ENCODE measurements at regions of chr6 and their contacts with region 1.

Region 1: GRCh38 chr6:32685603-32686002 is 19.1 kb upstream of the HLA-DQB1 start:
- DNase-seq: peak in 1 of 2 donors; percentile 88
- ATAC-seq: peak; percentile 90 to 96 (median 95)
- H3K4me3 ChIP-seq: no peak overlapping the region
- H3K4me3 Mint-ChIP-seq: peak overlapping the region; percentile 67
- H3K27ac ChIP-seq: peak overlapping the region; percentile 76
- H3K27ac Mint-ChIP-seq: peak overlapping the region; percentile 77 to 90
- H3K4me1 ChIP-seq: peaks cover 4% of the 10 kb centered on the region
- H3K4me1 Mint-ChIP-seq: peaks cover 27 to 39% of the 10 kb centered on the region in 2 donors
- H3K27me3 ChIP-seq: no peaks in the 10 kb centered on the region
- H3K27me3 Mint-ChIP-seq: peaks cover 8 to 24% of the 10 kb centered on the region in 2 donors
- CTCF ChIP-seq: no peak

Region 2: GRCh38 chr6:32337186-32337805 is 348.3 kb before region 1 on chr6:
- intact Hi-C with region 1: no loop called
- DNase-seq: no peak
- ATAC-seq: no peak
- H3K4me3 ChIP-seq: no peak overlapping the region
- H3K4me3 Mint-ChIP-seq: no peak overlapping the region
- H3K27ac ChIP-seq: no peak overlapping the region
- H3K27ac Mint-ChIP-seq: no peak overlapping the region
- H3K4me1 ChIP-seq: no peaks in the 10 kb centered on the region
- H3K4me1 Mint-ChIP-seq: no peaks in the 10 kb centered on the region
- H3K27me3 ChIP-seq: peaks cover 4% of the 10 kb centered on the region
- H3K27me3 Mint-ChIP-seq: peaks cover 8% of the 10 kb centered on the region in 2 donors
- CTCF ChIP-seq: no peak

Region 3: GRCh38 chr6:32666420-32667300 is 18.9 kb before region 1 on chr6 and contains the start of gene HLA-DQB1:
- intact Hi-C with region 1: loop called (anchors 1 kb)
- DNase-seq: peak; percentile 60 to 78
- ATAC-seq: peak; percentile 72 to 81 (median 73)
- H3K4me3 ChIP-seq: peak within 1 kb of the TSS; percentile 43
- H3K4me3 Mint-ChIP-seq: peak within 1 kb of the TSS; percentile 85
- H3K27ac ChIP-seq: peak within 1 kb of the TSS; percentile 84
- H3K27ac Mint-ChIP-seq: peak within 1 kb of the TSS; percentile 80 to 92
- H3K4me1 ChIP-seq: peaks cover 14% of the 10 kb centered on the region
- H3K4me1 Mint-ChIP-seq: peaks cover 23 to 41% of the 10 kb centered on the region in 2 donors
- H3K27me3 ChIP-seq: no peaks in the 10 kb centered on the region
- H3K27me3 Mint-ChIP-seq: peaks cover 17 to 51% of the 10 kb centered on the region in 2 donors
- CTCF ChIP-seq: no peak
- total RNA-seq, gene HLA-DQB1: 24.8 to 97.3 (median 25.5) TPM

Region 4: DNA sequence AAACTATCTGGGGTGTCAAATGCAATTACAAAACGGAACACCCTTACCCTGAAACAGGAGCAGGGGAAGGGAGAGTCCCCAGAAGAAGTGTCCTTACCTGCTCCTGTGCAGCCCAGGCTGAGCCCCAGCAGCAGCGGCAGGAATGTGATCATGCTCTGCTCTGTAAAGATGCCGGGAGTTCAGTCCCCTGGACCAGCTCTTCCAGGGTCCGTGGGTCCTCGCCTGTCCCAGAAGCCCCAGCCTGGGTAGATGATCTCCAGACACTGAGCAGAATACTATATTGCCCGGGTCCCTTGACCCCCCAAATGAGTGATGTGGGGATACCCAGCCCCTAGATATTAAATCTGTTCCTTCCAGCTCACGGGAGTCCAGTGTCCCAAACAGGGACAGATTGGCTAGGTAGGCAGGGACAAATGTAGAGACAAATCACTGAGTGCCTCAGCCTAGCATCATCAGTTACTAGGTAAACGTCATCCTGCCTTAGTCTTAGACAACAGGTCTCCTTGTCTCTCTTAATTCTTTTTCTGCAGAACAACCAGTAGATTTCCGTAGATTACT is 255.1 kb after region 1 on chr6 and contains the start of gene HLA-DMB:
- intact Hi-C with region 1: loop called (anchors 10 kb)
- DNase-seq: peak; percentile 31 to 90
- ATAC-seq: peak; percentile 71 to 80 (median 78)
- H3K4me3 ChIP-seq: peak within 1 kb of the TSS; percentile 74
- H3K4me3 Mint-ChIP-seq: peak within 1 kb of the TSS; percentile 88
- H3K27ac ChIP-seq: peak within 1 kb of the TSS; percentile 96
- H3K27ac Mint-ChIP-seq: peak within 1 kb of the TSS; percentile 92 to 98
- H3K4me1 ChIP-seq: peaks cover 75% of the 10 kb centered on the region
- H3K4me1 Mint-ChIP-seq: peaks cover 59 to 60% of the 10 kb centered on the region in 2 donors
- H3K27me3 ChIP-seq: no peaks in the 10 kb centered on the region
- H3K27me3 Mint-ChIP-seq: no peaks in the 10 kb centered on the region
- CTCF ChIP-seq: no peak
- total RNA-seq, gene HLA-DMB: 19.5 to 28.1 (median 23.0) TPM

Measured in natural killer cell (primary cell).